ENCODE measurements at regions of chr18 and their contacts with region 1.

Region 1: DNA sequence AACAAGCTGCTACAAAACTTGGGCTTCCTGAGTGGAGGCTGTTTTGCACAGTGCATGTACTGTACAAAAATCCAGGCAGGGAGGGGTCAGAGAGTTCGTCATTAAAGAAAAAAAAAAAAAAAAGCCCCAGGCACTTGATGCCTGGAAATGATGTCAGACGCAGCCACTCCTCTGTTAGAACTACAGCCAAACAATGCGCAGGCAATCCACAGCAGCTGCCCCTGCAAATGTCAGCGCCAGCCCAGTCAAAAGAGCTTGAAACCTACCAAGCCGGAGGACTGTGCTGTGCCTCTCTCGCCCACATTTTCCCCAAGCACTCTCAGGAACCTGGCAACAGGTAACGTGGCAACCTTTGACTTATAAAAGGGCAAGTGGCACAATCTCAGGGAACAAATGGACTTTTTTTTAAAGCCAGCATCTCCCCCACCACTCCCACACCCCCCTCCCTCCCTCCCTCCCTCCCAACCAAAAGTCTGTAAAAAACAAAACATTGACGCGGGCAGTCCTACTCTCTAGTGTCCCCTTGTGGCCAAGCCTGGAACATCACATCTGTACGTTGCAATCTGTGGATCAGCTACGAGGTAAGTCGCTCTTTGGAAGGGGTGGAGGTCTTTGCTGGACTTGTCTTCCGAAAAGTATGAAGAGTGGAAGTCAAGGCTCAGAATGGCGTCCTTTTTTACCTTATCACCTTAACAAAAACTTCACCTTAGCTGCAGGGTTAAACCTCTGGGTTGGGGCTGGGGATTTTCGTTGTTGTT is 144.1 kb downstream of the TGIF1 start:
- DNase-seq: peak; percentile 67 to 96 (median 86)

Region 2: GRCh38 chr18:3454365-3455089 is 139.6 kb before region 1 on chr18:
- intact Hi-C with region 1: loop called (anchors 2 kb)
- DNase-seq: peak in 2 of 10 donors; percentile 39 to 41

Region 3: DNA sequence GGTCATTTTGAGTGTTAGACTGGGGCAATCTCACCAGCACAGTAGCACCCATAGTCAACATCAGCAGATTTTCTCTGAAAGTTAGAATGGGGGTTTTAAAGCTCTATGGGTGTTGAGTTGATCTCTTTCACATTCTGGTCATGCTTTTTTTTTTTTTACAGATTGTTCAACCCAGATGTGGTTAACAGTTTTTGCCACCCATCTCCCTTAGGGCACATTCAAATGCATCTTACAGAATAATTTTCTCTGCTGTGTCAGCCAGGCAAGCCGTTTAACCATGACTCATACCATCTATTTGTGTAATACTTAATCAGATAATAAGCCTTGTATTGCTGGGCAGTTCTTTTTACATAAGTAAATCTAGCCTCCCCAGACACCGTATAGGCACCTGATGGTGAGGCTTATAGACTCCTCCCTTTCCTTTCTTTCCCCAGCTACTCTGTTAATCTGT is 82.1 kb before region 1 on chr18:
- intact Hi-C with region 1: no loop called
- DNase-seq: no peak

Region 4: GRCh38 chr18:3525870-3526420 is 68.1 kb before region 1 on chr18:
- intact Hi-C with region 1: loop called (anchors 5 kb)
- DNase-seq: peak; percentile 19 to 91 (median 56)

Region 5: DNA sequence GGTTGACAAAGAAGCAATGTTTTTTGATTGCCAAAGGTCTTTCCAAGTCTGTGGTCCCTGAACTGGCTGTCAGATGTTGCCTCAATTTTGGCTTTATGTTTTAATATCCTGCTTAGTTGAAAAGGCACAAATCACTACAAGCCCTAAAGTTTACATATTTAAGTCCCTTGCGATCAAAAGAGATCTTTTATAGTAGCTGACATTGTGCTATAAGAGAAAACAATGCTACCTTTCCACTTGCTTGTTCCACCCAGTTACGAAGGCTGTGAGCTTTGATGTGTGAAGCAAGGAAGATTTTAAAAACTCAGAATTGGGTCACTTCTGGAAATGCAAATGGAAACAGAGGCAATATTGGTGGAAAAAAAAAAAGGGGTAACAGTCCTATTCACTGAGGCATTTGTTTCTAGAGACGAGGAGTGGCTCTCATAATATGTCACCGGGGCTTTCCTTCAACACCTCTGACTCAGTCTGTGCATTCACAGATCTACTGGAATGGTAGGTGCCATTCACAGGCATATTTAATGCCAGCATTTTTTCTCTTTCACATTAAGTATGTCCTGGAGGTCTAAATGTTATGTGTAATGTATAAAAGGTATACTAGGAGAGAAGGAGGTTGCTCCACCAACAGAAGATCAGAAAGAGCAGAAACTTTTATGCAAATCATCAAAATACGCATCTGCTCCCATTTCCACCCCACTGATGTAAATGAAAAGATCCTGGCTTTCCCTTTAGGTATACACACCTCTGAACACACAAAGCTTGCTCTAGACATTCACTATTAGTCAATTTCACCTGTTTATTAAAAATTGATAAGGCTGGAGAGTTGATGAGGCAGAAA is 52.3 kb before region 1 on chr18:
- intact Hi-C with region 1: no loop called
- DNase-seq: no peak